Naive thymus-derived CD4-positive, alpha-beta T cell (primary cell): ENCODE measurements at regions of chr3 and their contacts with region 1.

Region 1: DNA sequence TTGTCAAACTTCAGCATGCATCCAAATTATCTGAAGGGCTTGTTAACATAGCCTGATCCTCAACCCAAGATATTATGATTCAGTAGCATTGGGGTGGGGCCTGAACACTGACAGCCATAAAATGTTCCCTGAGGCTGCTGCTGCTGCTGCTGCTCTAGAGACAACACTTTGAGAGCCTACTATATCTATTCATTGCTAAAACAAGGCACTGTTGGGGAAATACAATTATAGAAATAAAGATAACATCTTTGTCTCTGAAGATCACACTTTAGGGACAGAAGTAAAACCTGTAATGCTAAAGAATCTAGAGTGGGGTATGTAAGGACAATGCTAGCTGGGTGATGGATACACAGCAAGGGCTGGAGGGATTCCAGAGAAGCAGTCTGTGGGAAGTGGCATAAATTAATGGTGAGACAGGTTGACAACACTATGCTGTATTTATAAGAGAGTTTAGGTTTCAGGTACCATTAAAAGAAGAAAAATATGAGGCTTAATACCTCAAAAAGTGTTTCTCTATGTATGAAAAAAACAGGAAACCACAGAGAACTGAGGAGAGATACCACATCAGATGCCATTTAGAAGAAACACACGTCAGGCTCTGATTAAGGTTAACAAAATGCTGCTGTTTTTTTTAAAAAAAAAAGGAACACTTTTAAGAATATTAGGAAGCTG is 115.9 kb downstream of the CBLB start:
- DNase-seq: peak in 7 of 9 donors; percentile 70 to 90 (median 86)
- ATAC-seq: peak; percentile 89
- H3K4me3 ChIP-seq: peak overlapping the region; percentile 20
- H3K4me3 Mint-ChIP-seq: peak overlapping the region; percentile 64 to 85 (median 80)
- H3K27ac ChIP-seq: peak overlapping the region; percentile 71
- H3K27ac Mint-ChIP-seq: peak overlapping the region; percentile 91 to 99 (median 98)
- H3K4me1 ChIP-seq: peaks cover 75 to 87% of the 10 kb centered on the region in 2 donors
- H3K4me1 Mint-ChIP-seq: peaks cover 31 to 96% (median 83%) of the 10 kb centered on the region in 7 donors
- H3K27me3 ChIP-seq: no peaks in the 10 kb centered on the region
- H3K27me3 Mint-ChIP-seq: no peaks in the 10 kb centered on the region

Region 2: GRCh38 chr3:105006164-105006563 is 746.7 kb before region 1 on chr3:
- CTCF ChIA-PET with region 1: no interaction called
- POLR2A ChIA-PET with region 1: no interaction called
- intact Hi-C with region 1: no loop called
- DNase-seq: no peak
- ATAC-seq: no peak
- H3K4me3 ChIP-seq: no peak overlapping the region
- H3K4me3 Mint-ChIP-seq: no peak overlapping the region
- H3K27ac ChIP-seq: no peak overlapping the region
- H3K27ac Mint-ChIP-seq: no peak overlapping the region
- H3K4me1 ChIP-seq: no peaks in the 10 kb centered on the region
- H3K4me1 Mint-ChIP-seq: no peaks in the 10 kb centered on the region
- H3K27me3 ChIP-seq: no peaks in the 10 kb centered on the region
- H3K27me3 Mint-ChIP-seq: no peaks in the 10 kb centered on the region

Region 3: DNA sequence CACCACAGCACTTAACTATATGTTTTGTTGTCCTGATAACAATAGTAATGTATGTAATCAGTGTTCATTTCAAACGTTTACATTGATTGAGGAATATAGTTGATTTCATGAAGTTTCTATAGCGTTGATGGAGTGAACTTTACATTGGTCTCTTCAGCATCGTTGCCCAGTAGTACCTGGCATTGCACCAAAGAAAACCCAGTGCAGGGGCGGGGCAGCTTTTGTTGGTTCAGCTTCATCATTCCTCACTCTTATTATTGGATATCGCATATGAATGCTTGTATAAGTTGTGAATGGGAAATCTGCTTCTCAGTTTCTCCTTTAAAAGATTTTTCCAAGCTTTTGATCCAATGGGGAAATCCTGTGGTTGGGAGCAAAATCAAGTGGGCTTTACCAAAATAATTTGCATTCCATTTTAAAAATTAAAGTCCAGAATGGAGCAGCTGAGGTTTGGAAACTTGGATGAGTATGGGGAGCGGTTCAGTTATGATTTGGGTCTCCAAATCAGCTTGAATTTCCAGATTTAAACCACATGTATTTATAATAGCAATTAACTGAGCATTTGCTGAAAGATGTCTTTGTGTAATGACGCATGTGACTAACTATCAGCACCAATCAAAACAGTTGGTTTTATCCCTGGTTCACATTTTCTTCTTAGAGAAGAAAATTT is 172.4 kb before region 1 on chr3:
- CTCF ChIA-PET with region 1: no interaction called
- POLR2A ChIA-PET with region 1: no interaction called
- intact Hi-C with region 1: no loop called
- DNase-seq: no peak
- ATAC-seq: no peak
- H3K4me3 ChIP-seq: no peak overlapping the region
- H3K4me3 Mint-ChIP-seq: no peak overlapping the region
- H3K27ac ChIP-seq: no peak overlapping the region
- H3K27ac Mint-ChIP-seq: no peak overlapping the region
- H3K4me1 ChIP-seq: no peaks in the 10 kb centered on the region
- H3K4me1 Mint-ChIP-seq: no peaks in the 10 kb centered on the region
- H3K27me3 ChIP-seq: no peaks in the 10 kb centered on the region
- H3K27me3 Mint-ChIP-seq: no peaks in the 10 kb centered on the region

Region 4: GRCh38 chr3:105686278-105686897 is 66.5 kb before region 1 on chr3:
- CTCF ChIA-PET with region 1: no interaction called
- POLR2A ChIA-PET with region 1: no interaction called
- intact Hi-C with region 1: loop called (anchors 1 to 5 kb)
- DNase-seq: peak in 6 of 9 donors; percentile 17 to 57 (median 48)
- ATAC-seq: peak; percentile 76
- H3K4me3 ChIP-seq: no peak overlapping the region
- H3K4me3 Mint-ChIP-seq: no peak overlapping the region
- H3K27ac ChIP-seq: no peak overlapping the region
- H3K27ac Mint-ChIP-seq: peak overlapping the region in 8 of 9 donors; percentile 18 to 59 (median 48)
- H3K4me1 ChIP-seq: peaks cover 4 to 5% of the 10 kb centered on the region in 2 donors
- H3K4me1 Mint-ChIP-seq: peaks cover 14 to 37% (median 29%) of the 10 kb centered on the region in 7 donors
- H3K27me3 ChIP-seq: no peaks in the 10 kb centered on the region
- H3K27me3 Mint-ChIP-seq: no peaks in the 10 kb centered on the region

Region 5: DNA sequence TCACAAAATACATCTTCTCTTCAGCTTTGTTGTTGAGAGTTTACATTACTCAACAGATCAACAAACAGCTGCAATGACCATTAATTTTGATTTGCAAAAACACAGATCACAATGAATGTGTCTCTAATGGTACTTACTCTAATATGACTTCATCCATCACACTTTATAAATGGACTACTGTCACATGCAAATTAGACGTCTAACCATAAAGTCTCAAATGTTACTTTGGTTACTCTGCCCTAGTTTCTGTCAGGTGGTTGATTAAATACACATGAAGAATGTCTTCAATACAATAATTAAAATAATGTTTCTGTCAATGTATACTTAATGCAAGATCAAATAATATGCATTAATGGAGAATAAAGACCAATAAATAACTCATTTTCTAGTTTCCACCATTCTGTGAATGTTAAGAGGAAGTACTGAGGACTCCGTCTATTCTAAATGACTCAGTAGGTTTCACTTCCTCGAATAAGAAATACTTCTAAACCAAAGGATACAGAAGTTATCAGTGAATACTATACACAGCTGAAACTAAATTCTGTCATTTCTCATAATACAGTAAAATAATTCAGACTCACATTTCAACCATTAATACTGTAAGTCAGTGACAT is 29.8 kb before region 1 on chr3:
- CTCF ChIA-PET with region 1: no interaction called
- POLR2A ChIA-PET with region 1: no interaction called
- intact Hi-C with region 1: loop called in 1 of 2 experiments (anchors 2 kb)
- DNase-seq: peak in 1 of 9 donors; percentile 10
- ATAC-seq: peak; percentile 84
- H3K4me3 ChIP-seq: no peak overlapping the region
- H3K4me3 Mint-ChIP-seq: peak overlapping the region in 2 of 10 donors; percentile 47 to 56
- H3K27ac ChIP-seq: no peak overlapping the region
- H3K27ac Mint-ChIP-seq: peak overlapping the region in 4 of 9 donors; percentile 35 to 75 (median 49)
- H3K4me1 ChIP-seq: peaks cover 6% of the 10 kb centered on the region in 2 donors
- H3K4me1 Mint-ChIP-seq: peaks cover 8 to 43% (median 28%) of the 10 kb centered on the region in 7 donors
- H3K27me3 ChIP-seq: no peaks in the 10 kb centered on the region
- H3K27me3 Mint-ChIP-seq: no peaks in the 10 kb centered on the region

Region 6: GRCh38 chr3:105781871-105782270 is 29.0 kb after region 1 on chr3:
- CTCF ChIA-PET with region 1: no interaction called
- POLR2A ChIA-PET with region 1: no interaction called
- intact Hi-C with region 1: loop called in 1 of 2 experiments (anchors 5 kb)
- DNase-seq: no peak
- ATAC-seq: no peak
- H3K4me3 ChIP-seq: no peak overlapping the region
- H3K4me3 Mint-ChIP-seq: peak overlapping the region in 7 of 10 donors; percentile 1 to 51 (median 34)
- H3K27ac ChIP-seq: no peak overlapping the region
- H3K27ac Mint-ChIP-seq: peak overlapping the region in 8 of 9 donors; percentile 1 to 81 (median 24)
- H3K4me1 ChIP-seq: peaks cover 18% of the 10 kb centered on the region in 2 donors
- H3K4me1 Mint-ChIP-seq: peaks cover 31 to 77% (median 64%) of the 10 kb centered on the region in 7 donors
- H3K27me3 ChIP-seq: no peaks in the 10 kb centered on the region
- H3K27me3 Mint-ChIP-seq: no peaks in the 10 kb centered on the region

Region 7: DNA sequence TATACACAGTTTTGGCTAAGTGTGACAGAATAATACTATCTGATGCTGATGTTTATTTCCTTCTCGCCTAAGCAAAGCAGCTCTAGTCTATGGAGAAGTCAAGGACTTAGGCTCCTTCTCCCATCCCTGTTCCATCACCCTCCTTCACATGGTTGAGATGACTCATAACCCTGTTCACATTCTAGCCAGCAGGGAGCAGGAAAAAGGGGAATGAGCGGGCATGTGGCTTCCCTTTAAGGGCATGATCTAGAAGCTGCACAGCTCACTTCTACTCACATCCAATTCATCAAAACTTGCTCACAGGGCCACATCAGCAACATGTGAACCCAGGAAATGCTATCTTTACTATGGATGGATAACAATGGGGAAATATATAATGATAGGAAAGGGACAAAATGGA is 75.1 kb after region 1 on chr3:
- CTCF ChIA-PET with region 1: no interaction called
- POLR2A ChIA-PET with region 1: no interaction called
- intact Hi-C with region 1: loop called (anchors 1 kb)
- DNase-seq: no peak
- ATAC-seq: no peak
- H3K4me3 ChIP-seq: no peak overlapping the region
- H3K4me3 Mint-ChIP-seq: peak overlapping the region in 4 of 10 donors; percentile 29 to 52 (median 40)
- H3K27ac ChIP-seq: no peak overlapping the region
- H3K27ac Mint-ChIP-seq: peak overlapping the region in 4 of 9 donors; percentile 1 to 90 (median 20)
- H3K4me1 ChIP-seq: peaks cover 37 to 65% of the 10 kb centered on the region in 2 donors
- H3K4me1 Mint-ChIP-seq: peaks cover 57 to 92% (median 88%) of the 10 kb centered on the region in 7 donors
- H3K27me3 ChIP-seq: no peaks in the 10 kb centered on the region
- H3K27me3 Mint-ChIP-seq: no peaks in the 10 kb centered on the region

Region 8: DNA sequence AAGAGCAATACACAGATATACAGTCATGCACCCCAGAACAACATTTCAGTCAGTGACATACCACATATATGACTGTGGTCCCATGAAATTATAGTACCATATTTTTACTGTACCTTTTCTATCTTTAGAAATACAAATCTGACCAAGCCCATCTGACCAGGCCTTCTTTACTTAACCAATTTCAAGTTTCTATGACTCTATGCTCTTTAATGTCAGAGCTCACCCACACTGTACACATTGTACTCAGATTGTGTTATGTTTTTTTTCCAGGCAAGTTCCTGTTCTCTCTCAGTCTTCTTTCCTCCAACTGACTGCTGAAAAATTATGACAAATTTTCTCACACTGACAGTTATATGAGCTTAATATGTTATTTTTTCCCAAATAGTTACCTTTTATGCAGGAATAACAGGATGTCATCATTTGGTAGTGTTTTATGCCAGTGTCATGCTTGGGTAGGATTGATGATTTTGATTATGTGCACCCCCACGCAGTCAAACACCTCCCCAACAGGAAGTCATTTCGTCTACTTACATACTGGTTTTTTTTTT is 124.0 kb after region 1 on chr3:
- CTCF ChIA-PET with region 1: no interaction called
- POLR2A ChIA-PET with region 1: no interaction called
- intact Hi-C with region 1: loop called in 1 of 2 experiments (anchors 2 kb)
- DNase-seq: peak in 6 of 9 donors; percentile 17 to 38 (median 24)
- ATAC-seq: peak; percentile 73
- H3K4me3 ChIP-seq: peak overlapping the region; percentile 17
- H3K4me3 Mint-ChIP-seq: peak overlapping the region; percentile 49 to 78 (median 70)
- H3K27ac ChIP-seq: peak overlapping the region; percentile 41
- H3K27ac Mint-ChIP-seq: peak overlapping the region; percentile 33 to 93 (median 80)
- H3K4me1 ChIP-seq: peaks cover 0 to 7% of the 10 kb centered on the region in 2 donors
- H3K4me1 Mint-ChIP-seq: peaks cover 15 to 39% (median 31%) of the 10 kb centered on the region in 7 donors
- H3K27me3 ChIP-seq: no peaks in the 10 kb centered on the region
- H3K27me3 Mint-ChIP-seq: no peaks in the 10 kb centered on the region

Region 9: GRCh38 chr3:106206146-106206545 is 453.3 kb after region 1 on chr3:
- CTCF ChIA-PET with region 1: no interaction called
- POLR2A ChIA-PET with region 1: no interaction called
- intact Hi-C with region 1: loop called in 1 of 2 experiments (anchors 5 kb)
- DNase-seq: peak in 7 of 9 donors; percentile 12 to 48 (median 36)
- ATAC-seq: peak; percentile 81
- H3K4me3 ChIP-seq: peak overlapping the region; percentile 19
- H3K4me3 Mint-ChIP-seq: peak overlapping the region; percentile 51 to 79 (median 72)
- H3K27ac ChIP-seq: peak overlapping the region; percentile 32
- H3K27ac Mint-ChIP-seq: peak overlapping the region; percentile 3 to 91 (median 76)
- H3K4me1 ChIP-seq: peaks cover 14 to 18% of the 10 kb centered on the region in 2 donors
- H3K4me1 Mint-ChIP-seq: peaks cover 13 to 47% (median 40%) of the 10 kb centered on the region in 7 donors
- H3K27me3 ChIP-seq: no peaks in the 10 kb centered on the region
- H3K27me3 Mint-ChIP-seq: no peaks in the 10 kb centered on the region